ENCODE measurements at regions of chr12 and their contacts with region 1.

Region 1: GRCh38 chr12:15910864-15911721 is at the start of gene DERA:
- DNase-seq: peak; percentile 70
- H3K4me3 Mint-ChIP-seq: peak within 1 kb of the TSS; percentile 90
- H3K27ac Mint-ChIP-seq: peak within 1 kb of the TSS; percentile 85
- H3K4me1 Mint-ChIP-seq: peaks cover 16% of the 10 kb centered on the region
- H3K27me3 Mint-ChIP-seq: no peaks in the 10 kb centered on the region
- total RNA-seq, gene DERA: 28.4 to 29.0 TPM

Region 2: DNA sequence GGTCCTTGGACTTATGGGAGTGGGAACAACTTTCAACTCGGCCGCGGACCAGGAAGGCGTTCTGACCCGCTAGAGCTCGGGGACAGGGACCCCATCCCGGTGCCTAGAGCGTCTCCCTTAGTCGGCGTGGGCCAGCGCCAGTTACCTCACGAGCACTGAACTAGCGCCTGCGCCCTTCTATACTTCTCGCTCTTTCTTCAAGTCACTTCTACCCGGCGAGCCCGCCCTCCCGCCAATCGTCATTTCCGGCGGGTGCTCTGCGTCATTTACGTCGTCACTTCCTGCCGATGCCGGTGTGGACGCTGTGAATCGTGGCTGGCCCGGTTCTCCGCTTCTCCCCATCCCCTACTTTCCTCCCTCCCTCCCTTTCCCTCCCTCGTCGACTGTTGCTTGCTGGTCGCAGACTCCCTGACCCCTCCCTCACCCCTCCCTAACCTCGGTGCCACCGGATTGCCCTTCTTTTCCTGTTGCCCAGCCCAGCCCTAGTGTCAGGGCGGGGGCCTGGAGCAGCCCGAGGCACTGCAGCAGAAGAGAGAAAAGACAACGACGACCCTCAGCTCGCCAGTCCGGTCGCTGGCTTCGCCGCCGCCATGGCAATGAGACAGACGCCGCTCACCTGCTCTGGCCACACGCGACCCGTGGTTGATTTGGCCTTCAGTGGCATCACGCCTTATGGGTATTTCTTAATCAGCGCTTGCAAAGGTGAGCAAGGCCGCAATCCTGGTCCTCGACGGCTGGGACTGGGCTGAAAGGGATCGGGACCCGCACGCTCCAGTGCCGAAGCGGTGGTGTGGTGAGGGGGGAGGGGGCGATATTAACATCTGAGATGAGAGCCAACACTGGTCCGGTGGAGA is 28.7 kb before region 1 on chr12 and contains the start of gene STRAP:
- CTCF ChIA-PET with region 1: no interaction called
- POLR2A ChIA-PET with region 1: interaction called, 6 read pairs
- intact Hi-C with region 1: loop called (anchors 1 kb)
- DNase-seq: peak; percentile 98
- H3K4me3 Mint-ChIP-seq: peak within 1 kb of the TSS; percentile 96
- H3K27ac Mint-ChIP-seq: peak within 1 kb of the TSS; percentile 94
- H3K4me1 Mint-ChIP-seq: peaks cover 48% of the 10 kb centered on the region
- H3K27me3 Mint-ChIP-seq: no peaks in the 10 kb centered on the region
- total RNA-seq, gene STRAP: 135 to 140 TPM

Region 3: GRCh38 chr12:15966426-15966825 is 55.3 kb after region 1 on chr12:
- CTCF ChIA-PET with region 1: no interaction called
- POLR2A ChIA-PET with region 1: no interaction called
- intact Hi-C with region 1: no loop called
- DNase-seq: no peak
- H3K4me3 Mint-ChIP-seq: no peak overlapping the region
- H3K27ac Mint-ChIP-seq: no peak overlapping the region
- H3K4me1 Mint-ChIP-seq: no peaks in the 10 kb centered on the region
- H3K27me3 Mint-ChIP-seq: no peaks in the 10 kb centered on the region

Region 4: DNA sequence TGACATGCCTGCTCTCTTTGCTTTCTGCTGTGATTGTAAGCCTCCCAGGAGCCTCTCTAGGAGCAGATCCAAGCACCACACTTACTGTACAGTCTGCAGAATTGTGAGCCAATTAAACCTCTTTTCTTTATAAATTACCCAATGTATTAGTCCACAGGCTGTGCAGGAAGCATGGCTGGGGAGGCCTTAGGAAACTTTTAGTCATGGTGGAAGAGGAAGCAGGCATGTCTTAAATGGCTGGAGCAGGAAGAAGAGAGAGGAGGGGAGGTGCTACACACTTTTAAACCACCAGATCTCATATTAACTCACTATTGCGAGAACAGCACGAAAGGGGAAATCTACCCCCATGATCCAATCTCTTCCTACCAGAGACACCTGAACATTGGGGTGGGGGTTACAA is 108.9 kb after region 1 on chr12:
- CTCF ChIA-PET with region 1: no interaction called
- POLR2A ChIA-PET with region 1: no interaction called
- intact Hi-C with region 1: no loop called
- DNase-seq: no peak
- H3K4me3 Mint-ChIP-seq: no peak overlapping the region
- H3K27ac Mint-ChIP-seq: no peak overlapping the region
- H3K4me1 Mint-ChIP-seq: no peaks in the 10 kb centered on the region
- H3K27me3 Mint-ChIP-seq: no peaks in the 10 kb centered on the region

Region 5: DNA sequence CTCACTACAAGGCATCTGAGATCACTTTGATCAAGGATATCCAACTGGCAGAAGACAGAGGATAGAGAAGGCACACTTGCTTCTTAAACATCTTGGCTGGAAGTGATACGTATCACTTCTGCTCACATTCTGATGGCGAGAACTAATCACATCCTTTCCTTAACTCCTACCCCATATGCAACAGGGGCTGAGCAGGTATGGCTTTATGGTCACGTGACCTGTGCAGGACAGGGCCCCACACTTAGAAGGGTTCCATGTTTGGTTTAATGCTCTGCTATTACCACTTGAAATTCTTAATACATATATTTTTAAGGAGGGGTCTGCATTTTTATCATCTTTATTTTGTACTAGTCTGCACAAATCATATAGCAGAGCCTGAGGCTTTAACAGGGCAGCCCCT is 189.1 kb after region 1 on chr12:
- CTCF ChIA-PET with region 1: no interaction called
- POLR2A ChIA-PET with region 1: no interaction called
- intact Hi-C with region 1: no loop called
- DNase-seq: no peak
- H3K4me3 Mint-ChIP-seq: no peak overlapping the region
- H3K27ac Mint-ChIP-seq: no peak overlapping the region
- H3K4me1 Mint-ChIP-seq: no peaks in the 10 kb centered on the region
- H3K27me3 Mint-ChIP-seq: no peaks in the 10 kb centered on the region

Region 6: GRCh38 chr12:16272222-16272621 is 361.1 kb after region 1 on chr12:
- CTCF ChIA-PET with region 1: no interaction called
- POLR2A ChIA-PET with region 1: no interaction called
- intact Hi-C with region 1: no loop called
- DNase-seq: no peak
- H3K4me3 Mint-ChIP-seq: no peak overlapping the region
- H3K27ac Mint-ChIP-seq: no peak overlapping the region
- H3K4me1 Mint-ChIP-seq: no peaks in the 10 kb centered on the region
- H3K27me3 Mint-ChIP-seq: no peaks in the 10 kb centered on the region